ENCODE measurements at regions of chr3 and their contacts with region 1.

Region 1: DNA sequence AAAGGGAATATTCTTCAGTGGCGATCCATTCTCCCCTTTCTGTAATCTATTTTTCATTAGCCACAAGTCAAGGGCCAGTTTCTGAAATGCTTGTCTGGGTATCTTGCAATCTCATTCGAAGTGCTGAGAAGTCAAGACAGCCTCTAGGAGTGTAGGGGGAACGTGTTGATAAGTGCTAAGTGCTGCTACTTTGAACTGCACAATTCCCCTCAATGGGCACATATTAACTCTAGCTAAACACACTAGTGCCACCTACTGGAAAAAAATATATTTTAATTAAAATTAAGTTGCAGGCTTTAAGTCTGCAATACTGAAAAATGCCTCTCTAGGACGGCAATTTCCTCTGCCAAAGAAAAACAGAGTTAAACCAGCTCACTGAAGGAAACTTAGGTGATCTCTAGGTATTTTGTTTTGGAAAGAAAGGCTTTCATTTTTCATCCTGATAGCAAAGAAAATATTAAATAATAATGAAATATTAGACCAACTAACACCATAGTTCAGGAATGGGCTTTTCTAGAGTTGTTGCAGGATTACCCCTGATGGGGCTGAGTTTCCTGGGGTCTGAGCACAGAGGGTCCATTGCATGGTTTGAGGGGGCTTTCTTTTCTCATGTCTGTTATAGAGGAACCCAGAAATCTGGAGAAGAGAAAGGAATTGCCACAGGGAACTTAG is 181.9 kb upstream of the KBTBD8 start:
- DNase-seq: peak; percentile 47
- H3K4me3 ChIP-seq: no peak overlapping the region
- H3K27ac ChIP-seq: no peak overlapping the region
- H3K27me3 ChIP-seq: no peaks in the 10 kb centered on the region
- CTCF ChIP-seq: peak; percentile 69

Region 2: GRCh38 chr3:66276705-66277274 is 539.4 kb before region 1 on chr3:
- CTCF ChIA-PET with region 1: interaction called, 46 read pairs
- POLR2A ChIA-PET with region 1: no interaction called
- DNase-seq: peak; percentile 65
- H3K4me3 ChIP-seq: no peak overlapping the region
- H3K27ac ChIP-seq: no peak overlapping the region
- H3K27me3 ChIP-seq: no peaks in the 10 kb centered on the region
- CTCF ChIP-seq: peak; percentile 66

Region 3: GRCh38 chr3:66490214-66490613 is 326.0 kb before region 1 on chr3:
- CTCF ChIA-PET with region 1: interaction called, 19 read pairs
- POLR2A ChIA-PET with region 1: no interaction called
- DNase-seq: peak; percentile 76
- H3K4me3 ChIP-seq: peak overlapping the region; percentile 35
- H3K27ac ChIP-seq: peak overlapping the region; percentile 58
- H3K27me3 ChIP-seq: no peaks in the 10 kb centered on the region
- CTCF ChIP-seq: no peak

Region 4: GRCh38 chr3:66998113-66998903 is 182.1 kb after region 1 on chr3 and contains the start of gene KBTBD8:
- CTCF ChIA-PET with region 1: no interaction called
- POLR2A ChIA-PET with region 1: no interaction called
- DNase-seq: peak; percentile 95
- H3K4me3 ChIP-seq: peak within 1 kb of the TSS; percentile 83
- H3K27ac ChIP-seq: peak within 1 kb of the TSS; percentile 54
- H3K27me3 ChIP-seq: no peaks in the 10 kb centered on the region
- CTCF ChIP-seq: no peak
- polyA plus RNA-seq, gene KBTBD8: 1.9 and 2.0 TPM in 2 replicates